WTC11 (cell line): ENCODE measurements at regions of chr5 and their contacts with region 1.

Region 1: DNA sequence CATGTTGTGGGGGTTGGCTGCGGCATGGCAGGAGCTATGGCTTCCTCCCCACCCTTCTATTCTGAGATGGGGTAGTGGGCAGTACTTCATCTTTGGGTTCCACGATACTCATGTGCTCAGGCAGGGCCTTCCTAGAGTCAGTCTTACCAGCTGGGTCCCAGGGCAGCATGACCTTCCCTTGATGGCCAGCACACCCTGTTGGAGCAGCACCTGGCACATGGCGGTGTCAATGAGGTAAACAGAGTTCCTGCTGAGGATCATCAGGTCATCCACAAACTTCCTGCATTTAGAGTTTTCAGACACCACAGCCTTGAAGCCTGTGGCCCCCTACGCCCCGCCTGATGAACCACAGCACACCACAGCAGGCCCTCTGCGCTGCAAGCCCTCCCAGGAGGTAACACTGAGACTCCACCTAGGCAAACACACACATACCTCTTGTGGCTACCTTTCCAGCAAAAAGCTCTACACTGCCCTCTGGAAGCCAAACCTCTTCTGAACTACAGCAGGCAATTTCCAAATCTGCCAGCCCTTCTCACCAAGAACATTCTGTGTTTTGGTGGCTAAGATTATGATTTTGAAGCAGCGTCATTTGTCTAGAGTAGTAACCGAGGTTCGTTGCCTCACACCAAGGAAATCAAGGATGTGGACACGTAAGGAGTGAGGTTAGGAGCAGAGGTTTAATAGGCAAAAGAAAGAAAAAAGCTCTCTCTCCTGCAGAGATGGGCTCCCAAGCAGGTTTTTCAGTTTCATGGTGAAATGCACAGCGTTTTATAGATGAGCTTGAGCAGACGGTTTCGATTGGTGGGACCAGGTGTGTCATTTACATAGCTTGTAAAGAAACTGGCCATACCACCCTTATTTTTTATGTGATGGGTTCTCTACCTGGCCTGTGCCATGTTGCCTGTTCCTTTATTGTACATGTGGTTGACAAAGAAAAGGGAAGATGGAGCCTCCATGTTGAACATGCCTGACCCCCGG is 20.3 kb upstream of the TMEM174 start:
- DNase-seq: no peak
- ATAC-seq: peak; percentile 80
- H3K4me3 Mint-ChIP-seq: no peak overlapping the region
- H3K27ac Mint-ChIP-seq: no peak overlapping the region
- H3K4me1 Mint-ChIP-seq: peaks cover 13% of the 10 kb centered on the region
- H3K27me3 Mint-ChIP-seq: no peaks in the 10 kb centered on the region
- CTCF ChIP-seq: no peak

Region 2: GRCh38 chr5:72996632-72997031 is 156.1 kb before region 1 on chr5:
- CTCF ChIA-PET with region 1: no interaction called
- POLR2A ChIA-PET with region 1: no interaction called
- DNase-seq: no peak
- ATAC-seq: no peak
- H3K4me3 Mint-ChIP-seq: no peak overlapping the region
- H3K27ac Mint-ChIP-seq: no peak overlapping the region; the same call in 1 of the 2 replicates
- H3K4me1 Mint-ChIP-seq: no peaks in the 10 kb centered on the region
- H3K27me3 Mint-ChIP-seq: no peaks in the 10 kb centered on the region
- CTCF ChIP-seq: no peak

Region 3: DNA sequence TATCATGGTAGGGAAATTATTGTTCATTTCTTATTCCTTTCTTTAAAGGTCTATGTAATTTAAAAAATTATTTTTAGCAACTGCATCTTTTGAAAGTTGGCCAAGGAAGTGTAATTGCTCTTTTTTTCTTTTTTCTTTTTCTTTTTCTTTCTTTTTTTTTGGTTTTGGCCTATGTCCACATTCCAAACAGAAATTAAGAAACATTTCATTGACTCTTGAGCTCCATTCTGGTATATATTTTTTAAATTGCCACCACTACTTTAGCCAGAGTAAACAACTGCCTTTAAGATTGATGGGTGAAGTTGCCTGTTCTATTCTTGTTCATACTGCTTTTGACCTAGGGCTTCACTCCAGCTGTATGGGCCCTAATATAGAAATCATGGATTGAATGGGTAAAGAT is 108.2 kb before region 1 on chr5:
- CTCF ChIA-PET with region 1: no interaction called
- POLR2A ChIA-PET with region 1: no interaction called
- DNase-seq: no peak
- ATAC-seq: no peak
- H3K4me3 Mint-ChIP-seq: no peak overlapping the region
- H3K27ac Mint-ChIP-seq: no peak overlapping the region
- H3K4me1 Mint-ChIP-seq: peaks cover 5% of the 10 kb centered on the region; the same call in 1 of the 2 replicates
- H3K27me3 Mint-ChIP-seq: no peaks in the 10 kb centered on the region
- CTCF ChIP-seq: no peak

Region 4: DNA sequence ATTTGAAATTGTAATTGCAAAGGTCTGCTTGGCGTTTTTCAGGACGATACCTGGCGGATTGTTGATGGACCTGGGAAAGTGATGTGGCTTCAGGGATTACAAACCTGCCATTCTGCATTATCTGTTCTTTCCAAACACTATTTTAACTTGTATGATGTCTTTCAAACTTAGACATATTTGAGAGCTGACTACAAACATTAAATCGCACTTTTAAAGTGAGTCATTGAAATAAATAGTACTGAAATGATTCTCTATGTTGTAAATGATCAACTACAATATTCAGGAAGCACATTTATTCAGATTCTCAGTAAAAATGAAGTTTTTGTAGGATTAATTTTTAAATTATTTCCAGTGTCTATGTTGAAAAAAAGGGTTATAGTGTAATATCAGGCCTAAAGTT is 64.7 kb before region 1 on chr5:
- CTCF ChIA-PET with region 1: interaction called, 10 read pairs
- POLR2A ChIA-PET with region 1: no interaction called
- DNase-seq: no peak
- ATAC-seq: no peak
- H3K4me3 Mint-ChIP-seq: no peak overlapping the region
- H3K27ac Mint-ChIP-seq: no peak overlapping the region
- H3K4me1 Mint-ChIP-seq: 0 out of 2 replicates have a peak, but pooled peaks cover 2% of the 10 kb centered on the region
- H3K27me3 Mint-ChIP-seq: no peaks in the 10 kb centered on the region
- CTCF ChIP-seq: no peak

Region 5: DNA sequence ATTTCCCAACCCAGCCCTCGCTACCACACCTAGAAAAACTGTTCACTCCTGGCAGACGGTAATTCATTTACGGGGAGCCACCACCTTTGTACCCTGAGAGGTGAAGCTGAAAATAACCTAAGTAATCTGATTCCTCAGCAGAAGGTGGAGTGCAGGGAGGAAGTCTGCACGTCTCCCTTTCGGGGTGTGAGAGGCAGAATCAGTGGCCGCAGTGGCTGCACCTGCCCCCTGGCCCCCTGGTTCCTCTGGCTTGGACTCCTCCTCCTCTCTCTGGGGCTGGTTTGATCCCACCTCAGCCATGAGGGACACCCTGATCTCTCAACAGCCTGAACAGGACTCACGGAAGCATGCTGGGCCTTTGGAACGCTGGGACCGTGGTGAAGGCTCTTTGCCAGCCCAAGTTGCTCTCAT is 30.8 kb after region 1 on chr5:
- CTCF ChIA-PET with region 1: no interaction called
- POLR2A ChIA-PET with region 1: no interaction called
- DNase-seq: no peak
- ATAC-seq: no peak
- H3K4me3 Mint-ChIP-seq: no peak overlapping the region
- H3K27ac Mint-ChIP-seq: no peak overlapping the region
- H3K4me1 Mint-ChIP-seq: peaks cover 8% of the 10 kb centered on the region
- H3K27me3 Mint-ChIP-seq: no peaks in the 10 kb centered on the region
- CTCF ChIP-seq: no peak

Region 6: DNA sequence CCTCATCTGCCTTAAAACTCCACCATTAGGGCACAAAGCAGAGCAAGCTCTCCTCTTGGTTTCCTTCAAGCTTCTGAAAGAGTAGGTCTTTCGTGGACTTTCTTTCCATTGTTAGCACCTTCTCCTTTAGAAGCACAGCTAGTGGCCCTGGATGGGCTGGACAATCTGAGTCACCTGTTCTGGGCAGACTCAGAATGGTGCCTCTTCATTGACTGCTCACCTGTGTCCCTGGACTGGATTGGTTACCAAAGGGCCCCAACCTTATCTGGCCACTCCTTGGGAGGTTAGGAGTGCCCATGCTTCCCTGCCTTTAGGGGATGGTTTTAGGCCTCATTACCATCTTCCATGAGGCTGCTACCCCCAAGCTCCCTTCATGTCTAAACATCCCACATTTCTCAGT is 43.5 kb after region 1 on chr5:
- CTCF ChIA-PET with region 1: no interaction called
- POLR2A ChIA-PET with region 1: no interaction called
- DNase-seq: no peak
- ATAC-seq: no peak
- H3K4me3 Mint-ChIP-seq: no peak overlapping the region
- H3K27ac Mint-ChIP-seq: no peak overlapping the region
- H3K4me1 Mint-ChIP-seq: peaks cover 5% of the 10 kb centered on the region
- H3K27me3 Mint-ChIP-seq: peaks cover 25% of the 10 kb centered on the region
- CTCF ChIP-seq: no peak